Activated CD4-positive, alpha-beta T cell treated with anti-CD3 and anti-CD28 coated beads for 36 hours (primary cell): ENCODE measurements at regions of chr6 and their contacts with region 1.

Region 1: GRCh38 chr6:150238336-150238741 is 95.5 kb downstream of the PPP1R14C start:
- DNase-seq: no peak
- ATAC-seq: no peak
- H3K4me3 Mint-ChIP-seq: no peak overlapping the region
- H3K27ac Mint-ChIP-seq: no peak overlapping the region
- H3K4me1 Mint-ChIP-seq: peaks cover 32% of the 10 kb centered on the region
- H3K27me3 Mint-ChIP-seq: peaks cover 21% of the 10 kb centered on the region

Region 2: GRCh38 chr6:149529650-149530049 is 708.7 kb before region 1 on chr6:
- CTCF ChIA-PET with region 1: no interaction called
- POLR2A ChIA-PET with region 1: no interaction called
- intact Hi-C with region 1: no loop called
- DNase-seq: no peak
- ATAC-seq: no peak
- H3K4me3 Mint-ChIP-seq: no peak overlapping the region
- H3K27ac Mint-ChIP-seq: no peak overlapping the region
- H3K4me1 Mint-ChIP-seq: peaks cover 19% of the 10 kb centered on the region
- H3K27me3 Mint-ChIP-seq: no peaks in the 10 kb centered on the region

Region 3: DNA sequence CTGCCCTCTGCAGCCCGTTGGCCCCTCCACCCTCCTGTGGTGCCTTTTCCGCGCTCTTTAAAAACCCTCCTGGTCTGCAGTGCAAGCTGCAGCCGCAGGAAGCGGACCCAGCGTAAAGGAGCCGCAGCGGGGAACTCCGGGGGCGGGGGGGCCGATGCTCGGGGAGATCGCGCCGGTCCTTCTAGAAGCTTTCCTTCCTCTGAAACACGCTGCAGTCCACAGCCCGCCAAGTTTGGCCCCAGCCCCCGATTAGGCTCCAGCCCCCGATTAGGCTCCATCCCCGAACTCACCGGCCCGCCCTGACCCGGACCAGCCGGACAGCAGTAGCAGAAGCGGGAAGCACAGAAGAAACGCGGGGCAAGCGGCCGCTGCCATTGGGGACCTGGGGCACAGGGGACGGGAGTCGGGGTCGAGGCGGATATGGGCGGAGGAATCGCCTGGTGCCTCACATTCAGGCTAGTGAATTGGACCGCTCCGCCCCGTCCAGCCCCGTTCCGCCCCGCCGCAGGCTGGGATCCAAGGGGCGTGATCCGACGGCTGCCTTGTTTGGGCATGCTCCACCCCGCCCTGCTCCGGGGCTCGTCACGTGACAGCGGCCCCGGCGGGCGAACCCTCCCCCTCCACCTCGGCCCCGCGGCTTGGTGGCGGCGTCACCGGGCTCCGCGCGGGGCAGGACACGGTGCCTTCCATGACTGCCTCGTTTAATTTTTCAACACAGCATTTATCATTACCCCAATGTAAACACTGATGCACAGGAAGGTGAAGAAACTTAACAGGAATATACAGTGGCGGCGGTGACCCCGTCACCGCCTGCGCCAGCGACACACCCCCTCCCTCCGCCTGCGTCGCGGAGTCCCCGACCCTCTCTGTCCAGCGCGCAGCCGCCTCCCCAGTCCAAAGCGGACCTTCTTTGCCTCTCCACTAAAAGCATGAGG is 233.3 kb before region 1 on chr6:
- CTCF ChIA-PET with region 1: no interaction called
- POLR2A ChIA-PET with region 1: no interaction called
- intact Hi-C with region 1: no loop called
- DNase-seq: peak; percentile 93
- ATAC-seq: peak; percentile 74
- H3K4me3 Mint-ChIP-seq: peak overlapping the region; percentile 75
- H3K27ac Mint-ChIP-seq: no peak overlapping the region
- H3K4me1 Mint-ChIP-seq: peaks cover 59% of the 10 kb centered on the region
- H3K27me3 Mint-ChIP-seq: peaks cover 30% of the 10 kb centered on the region

Region 4: GRCh38 chr6:150256618-150257272 is 18.4 kb after region 1 on chr6:
- CTCF ChIA-PET with region 1: interaction called, 3 read pairs
- POLR2A ChIA-PET with region 1: no interaction called
- intact Hi-C with region 1: loop called in 1 of 2 experiments (anchors 1 kb)
- DNase-seq: no peak
- ATAC-seq: peak; percentile 83
- H3K4me3 Mint-ChIP-seq: no peak overlapping the region
- H3K27ac Mint-ChIP-seq: peak overlapping the region; percentile 10
- H3K4me1 Mint-ChIP-seq: peaks cover 30% of the 10 kb centered on the region
- H3K27me3 Mint-ChIP-seq: peaks cover 36% of the 10 kb centered on the region

Region 5: GRCh38 chr6:150301846-150302519 is 63.6 kb after region 1 on chr6:
- CTCF ChIA-PET with region 1: no interaction called
- POLR2A ChIA-PET with region 1: interaction called, 3 read pairs
- intact Hi-C with region 1: loop called in 1 of 2 experiments (anchors 1 kb)
- DNase-seq: peak; percentile 46
- ATAC-seq: peak; percentile 99
- H3K4me3 Mint-ChIP-seq: no peak overlapping the region
- H3K27ac Mint-ChIP-seq: no peak overlapping the region
- H3K4me1 Mint-ChIP-seq: peaks cover 11% of the 10 kb centered on the region
- H3K27me3 Mint-ChIP-seq: peaks cover 34% of the 10 kb centered on the region